ENCODE measurements at regions of chr15 and their contacts with region 1.

Region 1: DNA sequence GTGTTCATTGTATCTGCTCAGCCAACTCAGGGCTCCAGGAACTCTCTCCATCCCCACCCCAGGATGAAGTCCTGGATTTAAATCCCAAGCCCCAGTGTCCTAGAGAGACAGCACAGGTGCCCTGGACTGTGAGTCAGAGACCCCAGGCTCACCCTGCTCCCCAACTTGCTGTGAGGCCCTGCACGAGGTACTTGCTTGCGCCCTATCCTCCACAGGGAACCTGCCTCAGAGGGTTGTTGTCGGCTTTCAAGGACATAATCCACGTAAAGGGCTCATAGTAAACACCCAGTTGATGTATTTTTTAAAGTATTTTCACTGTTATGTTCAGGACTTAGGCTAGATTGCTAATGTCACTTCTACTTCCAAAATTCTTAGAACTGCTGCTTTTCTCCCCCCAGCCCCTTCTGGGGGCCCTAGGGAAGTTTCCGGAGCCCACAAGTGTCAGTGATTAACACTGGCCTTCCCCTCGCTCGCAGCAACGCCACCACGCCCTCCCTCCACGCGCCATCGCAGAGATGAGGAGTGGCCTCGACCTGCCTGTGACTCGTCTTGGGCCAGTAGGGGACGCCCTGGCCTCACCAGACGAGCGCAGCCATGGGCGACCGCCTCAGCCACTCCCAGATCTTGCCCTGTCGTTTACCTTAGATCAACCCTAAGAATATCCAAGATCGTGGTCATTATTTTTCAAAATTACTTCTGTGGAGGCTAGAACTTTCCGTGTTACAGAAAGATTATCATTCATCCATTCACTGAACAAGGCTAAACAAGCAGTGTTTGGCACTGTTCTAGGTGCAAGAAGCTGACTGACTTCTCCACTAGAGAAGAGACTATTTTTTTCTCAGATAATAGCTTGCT is 6.0 kb upstream of the SRP14 start:
- DNase-seq: peak; percentile 75
- H3K4me3 ChIP-seq: peak overlapping the region in 1 of 3 experiments; percentile 3
- H3K27ac ChIP-seq: peak overlapping the region; percentile 23
- H3K4me1 ChIP-seq: peaks cover 35% of the 10 kb centered on the region
- H3K27me3 ChIP-seq: no peaks in the 10 kb centered on the region
- CTCF ChIP-seq: peak; percentile 84 to 94

Region 2: DNA sequence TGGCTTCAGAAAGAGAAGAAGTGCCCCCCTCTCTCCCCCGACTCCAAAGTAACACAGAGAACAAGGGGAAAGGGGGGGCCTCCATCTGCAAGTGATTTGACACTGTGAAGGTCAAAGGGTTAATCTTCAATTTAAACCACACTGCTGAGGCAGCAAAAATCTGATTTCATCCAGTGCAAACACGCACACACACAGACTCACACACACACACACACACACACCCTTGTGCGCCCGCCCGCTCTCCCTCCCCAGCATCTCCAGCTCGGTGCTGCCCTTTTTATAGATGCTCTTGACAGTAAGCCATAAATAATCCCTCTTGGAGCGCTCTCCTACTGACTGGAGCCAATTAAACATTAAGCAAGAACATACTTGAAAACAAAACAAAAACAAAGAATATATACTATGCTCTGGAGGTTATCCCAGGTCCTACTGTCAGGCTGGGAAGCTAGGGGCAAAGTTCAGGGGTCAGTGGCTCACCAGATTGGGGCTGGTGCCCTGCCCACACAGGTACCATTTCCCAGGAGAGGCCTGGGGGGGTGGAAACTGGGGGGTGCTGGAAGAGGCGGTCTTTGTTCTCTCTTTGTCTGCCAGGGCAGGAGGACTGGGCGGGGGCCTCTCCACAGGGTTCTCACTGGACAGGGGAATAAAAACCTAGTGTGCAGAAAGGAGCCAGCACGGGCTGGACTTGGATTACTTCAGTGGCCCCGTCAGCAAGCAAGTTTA is 47.5 kb after region 1 on chr15:
- CTCF ChIA-PET with region 1: no interaction called
- dilution Hi-C with region 1: no loop called
- in situ Hi-C with region 1: loop called in 1 of 2 experiments (anchors 5 kb)
- intact Hi-C with region 1: no loop called
- DNase-seq: no peak
- H3K4me3 ChIP-seq: no peak overlapping the region
- H3K27ac ChIP-seq: no peak overlapping the region
- H3K4me1 ChIP-seq: no peaks in the 10 kb centered on the region
- H3K27me3 ChIP-seq: no peaks in the 10 kb centered on the region
- CTCF ChIP-seq: no peak

Region 3: GRCh38 chr15:40150163-40150925 is 105.4 kb after region 1 on chr15:
- CTCF ChIA-PET with region 1: no interaction called
- dilution Hi-C with region 1: loop called (anchors 5 kb)
- in situ Hi-C with region 1: loop called in 1 of 2 experiments (anchors 5 kb)
- intact Hi-C with region 1: no loop called
- DNase-seq: peak; percentile 97
- H3K4me3 ChIP-seq: no peak overlapping the region
- H3K27ac ChIP-seq: peak overlapping the region; percentile 35
- H3K4me1 ChIP-seq: peaks cover 49% of the 10 kb centered on the region
- H3K27me3 ChIP-seq: no peaks in the 10 kb centered on the region
- CTCF ChIP-seq: no peak

Region 4: DNA sequence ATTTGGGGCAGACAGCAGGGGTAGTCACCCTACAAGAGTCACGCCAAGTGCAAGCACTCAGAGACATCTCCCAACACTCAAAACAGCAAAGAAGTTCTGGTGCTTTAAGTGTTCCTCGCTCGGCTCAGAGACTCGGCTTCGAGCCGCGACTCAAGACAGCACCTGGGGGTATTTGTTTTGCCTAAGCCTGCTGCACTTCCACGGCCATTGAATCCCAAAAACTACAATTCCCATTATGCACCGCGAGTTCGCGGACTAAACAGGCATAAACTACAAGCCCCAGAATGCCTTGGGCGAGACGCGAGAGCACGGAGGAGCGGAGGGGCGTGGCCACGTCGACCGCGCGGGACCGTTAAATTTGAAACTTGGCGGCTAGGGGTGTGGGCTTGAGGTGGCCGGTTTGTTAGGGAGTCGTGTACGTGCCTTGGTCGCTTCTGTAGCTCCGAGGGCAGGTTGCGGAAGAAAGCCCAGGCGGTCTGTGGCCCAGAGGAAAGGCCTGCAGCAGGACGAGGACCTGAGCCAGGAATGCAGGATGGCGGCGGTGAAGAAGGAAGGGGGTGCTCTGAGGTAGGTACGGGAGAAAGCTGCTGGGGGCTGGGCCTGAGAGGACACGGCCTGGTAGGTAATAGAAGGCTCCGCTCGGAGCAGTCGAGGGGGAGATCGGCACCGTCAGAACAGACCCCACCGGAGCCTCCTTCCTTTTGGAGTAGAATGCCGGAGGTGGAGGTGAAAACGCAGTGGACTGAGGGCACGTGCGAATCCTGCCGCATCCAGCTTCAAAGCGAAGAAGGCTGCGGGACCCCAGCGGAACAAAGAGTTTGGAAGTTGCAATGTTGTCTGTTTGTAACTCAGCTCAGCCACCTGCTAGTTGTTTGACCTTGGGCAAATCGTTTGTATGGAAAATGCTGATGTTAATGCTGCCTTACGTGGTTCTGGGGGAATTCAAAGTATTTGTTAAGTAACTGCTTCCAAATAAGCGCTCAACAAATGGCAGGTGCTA is 116.0 kb after region 1 on chr15 and contains the start of gene BUB1B:
- CTCF ChIA-PET with region 1: no interaction called
- dilution Hi-C with region 1: no loop called
- in situ Hi-C with region 1: no loop called
- intact Hi-C with region 1: loop called (anchors 1 kb)
- DNase-seq: peak; percentile 90
- H3K4me3 ChIP-seq: peak within 1 kb of the TSS; percentile 81 to 97 (median 88)
- H3K27ac ChIP-seq: peak within 1 kb of the TSS; percentile 50
- H3K4me1 ChIP-seq: peaks cover 14% of the 10 kb centered on the region
- H3K27me3 ChIP-seq: no peaks in the 10 kb centered on the region
- CTCF ChIP-seq: no peak
- total RNA-seq, gene BUB1B: 2.8 to 34.6 TPM

Region 5: GRCh38 chr15:40190591-40190990 is 145.6 kb after region 1 on chr15:
- CTCF ChIA-PET with region 1: no interaction called
- dilution Hi-C with region 1: no loop called
- in situ Hi-C with region 1: loop called in 1 of 2 experiments (anchors 10 kb)
- intact Hi-C with region 1: loop called (anchors 2 kb)
- DNase-seq: peak; percentile 67
- H3K4me3 ChIP-seq: no peak overlapping the region
- H3K27ac ChIP-seq: peak overlapping the region; percentile 29
- H3K4me1 ChIP-seq: peaks cover 9% of the 10 kb centered on the region
- H3K27me3 ChIP-seq: no peaks in the 10 kb centered on the region
- CTCF ChIP-seq: no peak

Region 6: DNA sequence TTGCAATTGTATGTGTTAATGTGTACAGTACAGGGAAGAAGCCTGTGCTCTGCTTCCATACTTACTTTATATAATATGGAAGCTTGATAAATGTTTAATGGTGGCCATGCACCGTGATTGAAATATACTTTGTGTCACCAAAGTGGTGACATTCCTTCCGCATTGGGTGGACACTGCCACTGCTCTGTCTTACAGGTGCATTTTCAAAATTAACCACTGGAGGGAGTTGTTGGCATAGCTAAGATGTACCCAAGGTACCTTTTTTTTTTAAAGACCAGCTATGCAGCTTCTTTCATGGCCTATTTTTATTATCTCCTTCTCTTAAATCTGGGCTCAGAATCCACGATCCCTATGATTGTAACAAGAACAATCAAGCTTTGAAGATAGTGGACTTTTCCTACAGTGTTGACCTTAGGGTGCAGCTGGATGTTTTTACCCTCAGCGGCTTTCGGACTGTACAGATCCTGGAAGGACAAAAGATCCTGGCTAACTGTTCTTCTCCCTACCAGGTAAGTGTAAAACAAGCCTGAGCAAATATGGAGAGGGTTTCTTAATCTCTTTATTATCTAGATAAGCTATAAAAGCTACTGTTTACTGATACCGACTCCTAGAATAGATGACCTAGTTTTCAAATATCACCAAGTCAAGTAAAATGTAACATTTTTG is 172.3 kb after region 1 on chr15:
- CTCF ChIA-PET with region 1: no interaction called
- dilution Hi-C with region 1: no loop called
- in situ Hi-C with region 1: no loop called
- intact Hi-C with region 1: loop called (anchors 1 kb)
- DNase-seq: peak; percentile 48
- H3K4me3 ChIP-seq: no peak overlapping the region
- H3K27ac ChIP-seq: no peak overlapping the region
- H3K4me1 ChIP-seq: no peaks in the 10 kb centered on the region
- H3K27me3 ChIP-seq: no peaks in the 10 kb centered on the region
- CTCF ChIP-seq: peak; percentile 79 to 81

Measured in mammary epithelial cell (primary cell).